ENCODE measurements at regions of chr1 and their contacts with region 1.

Region 1: GRCh38 chr1:53945433-53946251 is at the start of gene IFT25:
- DNase-seq: peak; percentile 100
- ATAC-seq: peak; percentile 81
- H3K4me3 Mint-ChIP-seq: peak within 1 kb of the TSS; percentile 98
- H3K27ac Mint-ChIP-seq: peak within 1 kb of the TSS; percentile 92
- H3K4me1 Mint-ChIP-seq: peaks cover 37% of the 10 kb centered on the region
- H3K27me3 Mint-ChIP-seq: no peaks in the 10 kb centered on the region
- CTCF ChIP-seq: no peak
- total RNA-seq, gene IFT25: 38.0 and 41.0 TPM in 2 replicates

Region 2: GRCh38 chr1:53220171-53220961 is 725.3 kb before region 1 on chr1 and contains the start of gene CZIB:
- CTCF ChIA-PET with region 1: no interaction called
- POLR2A ChIA-PET with region 1: no interaction called
- intact Hi-C with region 1: loop called (anchors 5 kb)
- DNase-seq: peak; percentile 98
- ATAC-seq: peak; percentile 92
- H3K4me3 Mint-ChIP-seq: peak within 1 kb of the TSS; percentile 94
- H3K27ac Mint-ChIP-seq: peak within 1 kb of the TSS; percentile 97
- H3K4me1 Mint-ChIP-seq: peaks cover 20% of the 10 kb centered on the region
- H3K27me3 Mint-ChIP-seq: no peaks in the 10 kb centered on the region
- CTCF ChIP-seq: no peak
- total RNA-seq, gene CZIB: 48.9 and 51.8 TPM in 2 replicates

Region 3: DNA sequence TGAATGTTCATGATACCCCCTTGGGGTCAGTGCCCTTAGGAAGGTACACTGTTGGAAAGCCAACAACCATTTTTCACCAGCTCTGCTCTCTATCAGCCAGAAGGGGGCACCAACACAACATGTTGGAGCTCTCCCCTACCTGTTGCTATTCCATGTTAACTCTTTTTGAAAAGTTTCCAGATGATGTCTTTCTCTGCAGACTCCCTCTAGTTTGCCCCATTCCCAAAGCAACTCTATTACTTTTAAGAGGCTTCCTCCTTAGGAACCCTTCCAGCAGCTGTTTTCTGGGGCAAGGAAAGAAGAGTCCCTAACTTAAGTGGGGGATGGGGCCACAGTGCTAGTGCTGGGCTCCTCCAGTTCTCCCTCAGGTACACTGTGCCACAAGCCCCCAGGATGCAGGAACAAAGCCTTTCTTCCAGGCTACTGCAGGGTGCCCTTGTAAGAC is 84.7 kb before region 1 on chr1:
- CTCF ChIA-PET with region 1: interaction called, 108 read pairs
- POLR2A ChIA-PET with region 1: interaction called, 13 read pairs
- intact Hi-C with region 1: loop called (anchors 1 kb)
- DNase-seq: no peak
- ATAC-seq: peak; percentile 68
- H3K4me3 Mint-ChIP-seq: no peak overlapping the region
- H3K27ac Mint-ChIP-seq: no peak overlapping the region
- H3K4me1 Mint-ChIP-seq: peaks cover 25% of the 10 kb centered on the region
- H3K27me3 Mint-ChIP-seq: no peaks in the 10 kb centered on the region
- CTCF ChIP-seq: peak; percentile 42

Region 4: GRCh38 chr1:53878492-53879105 is 67.0 kb before region 1 on chr1:
- CTCF ChIA-PET with region 1: interaction called, 34 read pairs
- POLR2A ChIA-PET with region 1: interaction called, 6 read pairs
- intact Hi-C with region 1: loop called (anchors 1 kb)
- DNase-seq: no peak
- ATAC-seq: no peak
- H3K4me3 Mint-ChIP-seq: no peak overlapping the region
- H3K27ac Mint-ChIP-seq: no peak overlapping the region
- H3K4me1 Mint-ChIP-seq: no peaks in the 10 kb centered on the region
- H3K27me3 Mint-ChIP-seq: no peaks in the 10 kb centered on the region
- CTCF ChIP-seq: peak; percentile 56

Region 5: GRCh38 chr1:53906121-53906520 is 39.5 kb before region 1 on chr1:
- CTCF ChIA-PET with region 1: no interaction called
- POLR2A ChIA-PET with region 1: no interaction called
- intact Hi-C with region 1: no loop called
- DNase-seq: no peak
- ATAC-seq: no peak
- H3K4me3 Mint-ChIP-seq: no peak overlapping the region
- H3K27ac Mint-ChIP-seq: no peak overlapping the region
- H3K4me1 Mint-ChIP-seq: no peaks in the 10 kb centered on the region
- H3K27me3 Mint-ChIP-seq: no peaks in the 10 kb centered on the region
- CTCF ChIP-seq: no peak

Region 6: DNA sequence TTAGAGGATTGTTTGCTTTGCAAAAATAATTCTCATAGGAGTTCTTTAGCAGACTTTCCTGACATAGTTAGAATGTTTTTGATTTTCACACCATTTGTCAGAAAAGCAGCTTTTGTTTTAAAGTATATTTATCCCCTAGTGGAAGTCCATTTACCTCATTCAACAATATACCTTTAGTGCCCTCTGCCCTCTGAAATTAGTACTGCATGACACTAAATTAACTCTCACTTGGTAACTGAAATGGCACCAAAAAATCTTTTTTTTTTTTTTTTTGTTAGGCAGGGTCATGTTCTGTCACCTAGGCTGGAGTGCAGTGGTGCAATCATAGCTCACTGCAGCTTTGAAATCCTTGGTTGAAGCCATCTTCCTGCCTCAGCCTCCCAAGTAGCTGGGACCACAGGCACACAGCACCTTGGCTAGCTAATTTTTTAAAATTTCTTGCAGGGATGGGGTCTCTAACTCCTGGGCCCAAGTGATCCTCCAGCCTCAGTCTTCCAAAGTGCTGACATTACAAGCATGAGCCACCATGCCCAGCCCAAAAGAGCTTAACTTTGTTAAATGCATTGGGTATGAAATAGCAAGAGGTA is 14.1 kb after region 1 on chr1:
- CTCF ChIA-PET with region 1: interaction called, 17 read pairs
- POLR2A ChIA-PET with region 1: interaction called, 9 read pairs
- intact Hi-C with region 1: no loop called
- DNase-seq: no peak
- ATAC-seq: peak; percentile 56
- H3K4me3 Mint-ChIP-seq: no peak overlapping the region
- H3K27ac Mint-ChIP-seq: no peak overlapping the region
- H3K4me1 Mint-ChIP-seq: peaks cover 2% of the 10 kb centered on the region
- H3K27me3 Mint-ChIP-seq: no peaks in the 10 kb centered on the region
- CTCF ChIP-seq: peak; percentile 21

Region 7: GRCh38 chr1:54715493-54716298 is 770.1 kb after region 1 on chr1 and contains the start of gene TTC4:
- CTCF ChIA-PET with region 1: no interaction called
- POLR2A ChIA-PET with region 1: interaction called, 5 read pairs
- intact Hi-C with region 1: loop called (anchors 5 kb)
- DNase-seq: peak; percentile 88
- ATAC-seq: peak; percentile 98
- H3K4me3 Mint-ChIP-seq: peak within 1 kb of the TSS; percentile 94
- H3K27ac Mint-ChIP-seq: peak within 1 kb of the TSS; percentile 83
- H3K4me1 Mint-ChIP-seq: peaks cover 30% of the 10 kb centered on the region
- H3K27me3 Mint-ChIP-seq: no peaks in the 10 kb centered on the region
- CTCF ChIP-seq: no peak
- total RNA-seq, gene TTC4: 30.8 and 31.5 TPM in 2 replicates

Region 8: GRCh38 chr1:54996359-54996868 is 1050.8 kb after region 1 on chr1:
- CTCF ChIA-PET with region 1: no interaction called
- POLR2A ChIA-PET with region 1: no interaction called
- intact Hi-C with region 1: no loop called
- DNase-seq: peak; percentile 57
- ATAC-seq: peak; percentile 65
- H3K4me3 Mint-ChIP-seq: peak overlapping the region; percentile 25
- H3K27ac Mint-ChIP-seq: no peak overlapping the region
- H3K4me1 Mint-ChIP-seq: peaks cover 15% of the 10 kb centered on the region
- H3K27me3 Mint-ChIP-seq: peaks cover 46% of the 10 kb centered on the region
- CTCF ChIP-seq: no peak